Cardiac septum (tissue), 1 donor: ENCODE measurements at regions of chr14 and their contacts with region 1.

Region 1: DNA sequence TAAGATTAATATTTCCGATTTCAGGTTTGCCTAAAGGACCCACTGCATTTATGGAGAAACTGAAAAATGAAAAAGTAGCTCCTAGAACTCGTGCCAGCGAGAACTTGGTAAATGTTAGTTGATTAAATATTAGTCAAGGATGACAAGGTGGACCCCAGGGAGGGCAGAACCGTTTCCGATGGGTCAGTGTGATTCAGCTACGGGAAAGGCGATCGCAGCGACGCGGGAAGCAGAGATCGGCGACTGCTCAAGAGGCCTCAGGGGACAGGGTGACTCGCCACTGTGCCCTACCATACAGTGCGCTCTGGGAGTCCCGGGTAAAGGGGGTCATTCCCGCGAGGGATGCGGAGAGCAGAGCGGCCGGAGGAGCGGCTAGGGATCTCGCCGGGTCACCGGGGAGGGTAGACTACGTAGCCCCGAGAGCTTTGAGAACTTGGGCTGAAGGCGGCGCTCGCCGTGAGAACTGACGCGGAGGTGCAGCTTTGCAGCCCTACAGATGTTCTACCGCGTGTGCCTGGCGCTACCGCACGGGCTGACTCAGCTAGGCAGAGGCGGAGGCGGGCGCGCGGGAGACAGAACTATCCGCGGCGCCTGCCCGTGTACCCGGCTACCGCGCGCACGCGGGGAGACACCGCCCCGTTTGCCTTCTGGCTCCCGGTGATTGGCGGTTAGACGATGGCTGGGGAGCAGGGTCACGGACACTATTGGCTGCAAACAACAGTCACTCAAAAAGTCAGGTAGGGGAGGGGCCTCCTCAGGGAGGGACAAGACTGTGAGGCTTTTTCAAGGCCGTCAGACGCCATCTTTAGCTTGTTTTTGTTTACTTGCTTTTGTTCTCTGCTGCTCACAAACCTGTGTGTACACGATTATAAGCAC is 3.2 kb downstream of the C14orf93 start:
- DNase-seq: peak; percentile 98

Region 2: DNA sequence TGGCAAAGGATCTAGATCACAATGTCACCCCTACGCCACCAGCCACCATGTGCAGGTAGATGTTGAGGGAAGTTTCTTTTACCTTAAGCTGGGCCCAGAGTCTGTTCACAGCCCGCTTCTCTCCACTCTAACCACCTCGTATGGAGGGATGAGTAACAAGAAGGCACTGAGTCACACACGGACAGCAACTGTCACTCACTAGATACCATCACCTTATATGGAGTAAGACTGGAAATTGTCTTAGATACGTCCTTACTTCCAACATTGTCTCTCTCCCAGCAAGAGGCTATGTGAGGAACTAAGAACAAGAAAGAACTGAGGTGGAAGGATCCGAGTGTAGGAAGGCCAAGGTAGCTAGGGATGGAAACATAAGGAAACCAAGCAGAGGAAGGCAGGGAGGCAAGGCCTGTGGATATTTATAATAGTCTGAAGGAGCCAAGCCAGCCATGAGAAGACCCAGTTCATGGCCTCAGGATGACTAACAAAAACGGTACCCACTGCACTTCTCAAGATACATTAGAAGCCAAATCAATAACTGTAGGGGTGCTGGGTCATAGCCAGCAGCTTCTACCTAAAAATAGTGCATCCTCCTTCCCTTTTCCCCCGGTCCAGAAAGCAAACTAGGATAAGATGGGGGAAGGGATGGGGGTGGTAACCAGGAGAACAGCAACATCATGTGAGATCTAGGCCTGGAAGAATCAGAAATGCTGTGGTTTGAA is 108.3 kb before region 1 on chr14:
- intact Hi-C with region 1: no loop called
- DNase-seq: no peak

Region 3: GRCh38 chr14:23057757-23058653 is 51.2 kb after region 1 on chr14:
- intact Hi-C with region 1: loop called (anchors 5 kb)
- DNase-seq: peak; percentile 93